A673 (cell line): ENCODE measurements at regions of chr18 and their contacts with region 1.

Region 1: DNA sequence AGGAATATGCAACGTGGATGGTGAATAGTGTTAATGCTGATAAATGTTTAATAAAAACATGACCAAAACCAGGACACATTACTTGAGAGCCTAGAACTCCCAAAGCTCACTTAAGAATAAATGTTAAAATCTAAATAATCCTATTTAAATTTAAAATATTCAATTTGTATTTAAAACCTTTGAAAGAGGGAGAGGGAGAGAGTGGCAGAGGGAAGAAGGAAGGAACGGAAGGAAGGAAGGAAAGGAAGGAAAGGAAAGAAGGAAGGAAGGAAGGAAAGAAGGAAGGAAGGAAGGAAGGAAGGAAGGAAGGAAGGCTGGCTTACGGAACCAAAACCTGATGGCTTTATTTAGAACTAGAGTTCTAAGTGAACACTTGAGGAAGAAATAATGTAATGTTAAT is 324.1 kb upstream of the SYT4 start:
- DNase-seq: peak; percentile 83
- H3K4me3 ChIP-seq: no peak overlapping the region
- H3K27ac ChIP-seq: peak overlapping the region; percentile 98
- H3K4me1 ChIP-seq: peaks cover 40% of the 10 kb centered on the region
- H3K27me3 ChIP-seq: no peaks in the 10 kb centered on the region
- CTCF ChIP-seq: no peak

Region 2: DNA sequence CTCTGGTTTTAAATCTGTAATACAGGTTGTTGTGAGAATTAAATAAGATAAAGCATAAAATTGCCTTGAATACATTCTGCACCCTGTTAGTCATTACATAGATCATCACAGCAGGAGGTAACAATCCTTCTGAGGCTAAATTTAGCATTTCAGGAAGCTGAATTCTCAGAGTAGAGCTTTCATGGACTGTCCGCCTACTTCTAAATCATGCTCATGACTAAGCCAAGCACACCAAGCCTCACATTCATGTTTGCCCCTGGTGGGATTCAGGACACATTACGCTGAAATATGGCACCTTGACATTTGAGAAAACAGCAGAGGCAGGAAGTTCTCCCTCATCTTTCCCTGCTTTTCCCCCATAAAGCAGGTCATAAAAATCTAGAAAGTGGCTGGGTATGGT is 1663.0 kb before region 1 on chr18:
- CTCF ChIA-PET with region 1: interaction called, 4 read pairs
- POLR2A ChIA-PET with region 1: no interaction called
- intact Hi-C with region 1: loop called (anchors 2 kb)
- DNase-seq: peak; percentile 89
- H3K4me3 ChIP-seq: no peak overlapping the region
- H3K27ac ChIP-seq: peak overlapping the region; percentile 86
- H3K4me1 ChIP-seq: peaks cover 43% of the 10 kb centered on the region
- H3K27me3 ChIP-seq: no peaks in the 10 kb centered on the region
- CTCF ChIP-seq: 0 out of 2 replicates have a peak, but pooled peaks have one; percentile 12

Region 3: GRCh38 chr18:43314931-43315330 is 286.5 kb before region 1 on chr18:
- CTCF ChIA-PET with region 1: no interaction called
- POLR2A ChIA-PET with region 1: no interaction called
- intact Hi-C with region 1: loop called (anchors 2 kb)
- DNase-seq: no peak
- H3K4me3 ChIP-seq: no peak overlapping the region
- H3K27ac ChIP-seq: no peak overlapping the region
- H3K4me1 ChIP-seq: no peaks in the 10 kb centered on the region
- H3K27me3 ChIP-seq: no peaks in the 10 kb centered on the region
- CTCF ChIP-seq: no peak

Region 4: GRCh38 chr18:43367895-43368294 is 233.5 kb before region 1 on chr18:
- CTCF ChIA-PET with region 1: no interaction called
- POLR2A ChIA-PET with region 1: no interaction called
- intact Hi-C with region 1: no loop called
- DNase-seq: no peak
- H3K4me3 ChIP-seq: no peak overlapping the region
- H3K27ac ChIP-seq: no peak overlapping the region
- H3K4me1 ChIP-seq: no peaks in the 10 kb centered on the region
- H3K27me3 ChIP-seq: no peaks in the 10 kb centered on the region
- CTCF ChIP-seq: no peak